ENCODE measurements at regions of chr6 and their contacts with region 1.

Region 1: GRCh38 chr6:105346052-105346451 is 56.8 kb downstream of the PREP start:
- DNase-seq: no peak
- H3K4me3 Mint-ChIP-seq: no peak overlapping the region
- H3K27ac Mint-ChIP-seq: peak overlapping the region; percentile 84
- H3K4me1 Mint-ChIP-seq: peaks cover 14% of the 10 kb centered on the region
- H3K27me3 Mint-ChIP-seq: no peaks in the 10 kb centered on the region
- CTCF ChIP-seq: no peak

Region 2: GRCh38 chr6:105005451-105005850 is 340.6 kb before region 1 on chr6:
- CTCF ChIA-PET with region 1: no interaction called
- intact Hi-C with region 1: no loop called
- DNase-seq: no peak
- H3K4me3 Mint-ChIP-seq: no peak overlapping the region
- H3K27ac Mint-ChIP-seq: no peak overlapping the region
- H3K4me1 Mint-ChIP-seq: no peaks in the 10 kb centered on the region
- H3K27me3 Mint-ChIP-seq: no peaks in the 10 kb centered on the region
- CTCF ChIP-seq: no peak

Region 3: DNA sequence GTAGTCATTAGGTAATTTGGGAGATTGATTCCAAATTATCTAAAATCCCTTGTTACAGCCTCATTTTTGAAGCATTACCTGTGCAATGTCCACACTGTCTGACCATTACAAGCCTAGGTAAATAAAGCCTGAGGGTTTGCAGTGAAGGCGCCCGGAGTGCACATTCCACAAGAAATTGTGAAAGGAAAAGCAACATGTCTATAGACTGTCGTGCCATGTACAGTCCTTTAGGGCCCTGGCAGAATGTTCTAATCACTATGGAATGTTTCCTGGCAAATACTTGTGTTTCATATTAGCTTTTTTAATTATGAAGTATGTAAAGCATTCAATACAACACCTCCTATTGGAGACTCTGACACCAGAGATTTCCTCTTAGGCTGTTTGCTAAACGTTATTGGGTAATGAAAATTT is 28.0 kb after region 1 on chr6:
- CTCF ChIA-PET with region 1: interaction called, 12 read pairs
- intact Hi-C with region 1: no loop called
- DNase-seq: peak; percentile 62
- H3K4me3 Mint-ChIP-seq: no peak overlapping the region
- H3K27ac Mint-ChIP-seq: peak overlapping the region; percentile 92
- H3K4me1 Mint-ChIP-seq: peaks cover 55% of the 10 kb centered on the region
- H3K27me3 Mint-ChIP-seq: no peaks in the 10 kb centered on the region
- CTCF ChIP-seq: no peak

Region 4: DNA sequence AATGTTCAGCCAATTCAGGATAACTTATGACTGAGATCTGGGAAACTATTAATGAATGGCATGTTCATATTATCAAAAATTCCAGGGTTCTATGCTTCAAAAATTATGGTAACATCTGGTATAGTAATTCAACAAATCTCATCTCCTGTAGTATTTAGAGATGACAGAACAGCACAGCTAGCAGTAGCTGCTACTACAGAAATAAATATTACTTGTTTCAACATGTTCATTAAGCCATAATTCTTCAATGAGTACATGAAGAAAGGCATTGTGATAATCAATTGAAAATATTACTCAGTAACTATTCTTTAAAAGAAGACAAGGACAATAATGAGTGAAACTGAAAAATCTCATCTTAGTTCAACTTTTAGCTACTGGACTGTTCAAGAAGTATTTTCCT is 912.7 kb after region 1 on chr6:
- CTCF ChIA-PET with region 1: interaction called, 10 read pairs
- intact Hi-C with region 1: no loop called
- DNase-seq: no peak
- H3K4me3 Mint-ChIP-seq: no peak overlapping the region
- H3K27ac Mint-ChIP-seq: no peak overlapping the region
- H3K4me1 Mint-ChIP-seq: peaks cover 26% of the 10 kb centered on the region
- H3K27me3 Mint-ChIP-seq: no peaks in the 10 kb centered on the region
- CTCF ChIP-seq: no peak

Measured in Calu3 (cell line).